Mammary epithelial cell (primary cell): ENCODE measurements at regions of chr19 and their contacts with region 1.

Region 1: DNA sequence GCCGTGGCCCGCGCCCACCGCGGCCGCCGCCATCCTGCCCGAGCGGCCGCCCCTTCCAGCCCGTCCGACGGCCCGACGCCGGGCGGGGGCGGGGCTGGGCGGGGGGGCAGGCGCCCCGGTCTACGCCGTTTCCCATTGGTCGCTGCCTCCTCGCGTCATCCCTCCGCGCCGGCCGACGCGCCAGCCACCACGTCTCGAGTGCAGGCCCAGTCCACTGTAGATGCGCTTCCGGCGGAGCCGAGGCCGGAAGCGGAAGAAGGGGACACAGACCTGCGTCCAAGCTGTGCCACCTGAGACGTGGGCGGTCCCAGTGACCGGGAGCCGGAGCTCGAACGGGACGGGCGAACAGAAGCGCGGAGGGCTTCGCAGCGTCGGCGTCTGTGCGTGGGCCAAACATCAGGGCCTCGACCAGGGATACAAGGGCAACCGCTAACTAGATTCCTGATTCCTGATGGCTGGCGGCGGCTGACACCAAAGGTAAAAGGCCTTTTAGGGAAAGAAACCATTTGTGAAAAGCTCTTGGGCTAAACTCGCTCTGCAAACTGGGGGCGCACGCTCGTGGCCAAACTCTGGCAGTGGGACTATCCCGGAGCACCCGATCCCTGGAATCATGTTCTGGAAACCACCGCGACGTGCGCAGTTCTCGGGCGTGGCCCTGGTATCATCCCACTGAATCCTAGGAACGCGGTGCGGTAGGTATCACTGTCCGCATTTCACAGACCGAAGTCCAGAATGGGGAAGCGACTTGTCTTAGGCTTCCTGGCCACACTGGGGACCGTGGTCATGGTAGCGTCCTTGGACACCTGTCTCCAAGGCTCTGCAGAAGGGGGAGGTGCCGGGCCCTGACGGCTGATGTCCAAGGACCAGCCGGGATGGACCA is at the start of gene SLC35E1:
- DNase-seq: peak; percentile 96
- H3K4me3 ChIP-seq: peak within 1 kb of the TSS; percentile 86 to 92 (median 91)
- H3K27ac ChIP-seq: peak within 1 kb of the TSS; percentile 91
- H3K4me1 ChIP-seq: peaks cover 31% of the 10 kb centered on the region
- H3K27me3 ChIP-seq: no peaks in the 10 kb centered on the region
- CTCF ChIP-seq: no peak
- total RNA-seq, gene SLC35E1: 50.8 to 67.2 TPM

Region 2: DNA sequence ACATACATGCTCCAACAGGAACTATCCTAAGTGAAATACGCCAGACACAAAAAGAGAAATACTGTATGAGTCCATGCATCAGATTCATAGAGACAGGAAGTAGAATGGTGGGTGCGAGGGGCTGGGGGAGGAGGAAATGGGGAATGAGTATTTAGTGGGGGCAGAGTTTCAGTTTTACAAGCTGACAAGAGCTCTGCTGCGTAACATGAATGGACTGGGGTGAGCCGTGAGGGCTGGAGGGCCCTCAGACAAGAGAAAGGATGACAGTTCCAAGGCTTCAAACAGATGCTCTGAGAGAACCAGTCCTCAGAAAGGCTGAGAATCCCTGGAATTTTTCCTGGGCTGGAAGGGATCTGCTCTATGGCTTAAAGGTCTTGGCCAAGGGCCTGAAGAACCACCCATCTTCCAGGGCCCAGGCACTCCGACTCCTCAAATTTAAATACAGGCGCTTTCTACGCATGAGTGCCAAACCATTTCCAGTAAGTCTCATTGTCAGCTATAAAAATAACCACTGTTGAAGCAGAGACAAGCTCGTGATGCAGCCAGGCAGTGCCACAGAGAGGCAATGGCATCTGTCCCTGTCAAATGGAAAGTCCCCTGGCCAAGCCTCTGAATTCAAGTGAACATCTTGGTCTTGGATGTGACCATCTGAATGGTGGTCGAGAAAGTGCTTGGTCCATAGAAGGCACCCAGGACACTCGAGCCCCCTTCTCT is 230.4 kb before region 1 on chr19:
- CTCF ChIA-PET with region 1: no interaction called
- dilution Hi-C with region 1: no loop called
- in situ Hi-C with region 1: no loop called
- intact Hi-C with region 1: no loop called
- DNase-seq: no peak
- H3K4me3 ChIP-seq: no peak overlapping the region
- H3K27ac ChIP-seq: no peak overlapping the region
- H3K4me1 ChIP-seq: peaks cover 19% of the 10 kb centered on the region
- H3K27me3 ChIP-seq: no peaks in the 10 kb centered on the region
- CTCF ChIP-seq: no peak

Region 3: GRCh38 chr19:16355293-16356043 is 217.1 kb before region 1 on chr19:
- CTCF ChIA-PET with region 1: no interaction called
- dilution Hi-C with region 1: no loop called
- in situ Hi-C with region 1: no loop called
- intact Hi-C with region 1: no loop called
- DNase-seq: peak; percentile 21
- H3K4me3 ChIP-seq: peak overlapping the region in 1 of 3 experiments; percentile 6
- H3K27ac ChIP-seq: no peak overlapping the region
- H3K4me1 ChIP-seq: peaks cover 7% of the 10 kb centered on the region
- H3K27me3 ChIP-seq: no peaks in the 10 kb centered on the region
- CTCF ChIP-seq: no peak

Region 4: GRCh38 chr19:16529466-16530144 is 43.0 kb before region 1 on chr19:
- CTCF ChIA-PET with region 1: no interaction called
- dilution Hi-C with region 1: no loop called
- in situ Hi-C with region 1: no loop called
- intact Hi-C with region 1: no loop called
- DNase-seq: no peak
- H3K4me3 ChIP-seq: no peak overlapping the region
- H3K27ac ChIP-seq: no peak overlapping the region
- H3K4me1 ChIP-seq: no peaks in the 10 kb centered on the region
- H3K27me3 ChIP-seq: no peaks in the 10 kb centered on the region
- CTCF ChIP-seq: no peak

Region 5: DNA sequence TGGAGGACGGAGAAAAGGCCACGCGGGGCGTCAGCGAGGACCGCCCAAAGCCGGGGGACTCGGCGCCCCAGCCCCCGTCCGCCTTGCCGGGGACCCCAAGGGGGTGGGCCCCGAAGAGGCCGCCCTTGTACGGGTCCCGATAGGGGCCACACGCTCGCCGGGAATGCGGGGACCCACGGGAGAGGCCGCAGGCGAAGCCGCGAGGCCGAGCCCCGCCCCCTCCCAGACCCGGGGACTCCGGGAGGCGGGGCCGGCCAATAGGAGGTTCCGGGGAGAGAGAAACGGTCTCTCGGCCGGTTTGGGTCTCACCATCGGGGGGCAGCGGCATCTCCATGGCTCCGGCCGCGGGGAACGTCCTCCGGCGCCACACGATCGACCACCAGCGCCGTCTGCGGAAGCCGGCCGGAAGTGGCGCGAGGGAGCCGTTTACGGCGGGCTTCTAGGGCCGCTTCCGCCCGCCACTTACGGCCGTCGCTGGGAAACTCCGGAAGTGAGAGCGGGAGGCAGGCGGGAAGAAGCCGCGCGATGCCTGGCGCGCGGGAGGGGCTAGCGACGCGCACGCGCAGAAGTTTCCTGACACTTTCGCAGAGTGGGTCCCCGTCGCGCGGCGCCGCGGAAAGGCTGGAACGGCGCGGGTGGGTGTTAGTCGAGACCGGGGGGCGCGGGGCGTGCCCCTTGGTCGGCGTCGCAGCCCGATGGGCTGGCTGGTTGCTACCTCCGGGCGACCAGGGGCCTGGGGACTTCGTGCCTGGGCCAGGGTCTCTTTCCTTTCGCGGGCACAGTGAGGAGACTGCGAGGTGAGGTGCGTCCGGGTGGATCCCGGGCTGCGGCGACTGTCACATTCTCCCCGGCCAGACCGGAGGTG is 30.3 kb before region 1 on chr19 and contains the start of gene CHERP:
- CTCF ChIA-PET with region 1: no interaction called
- dilution Hi-C with region 1: loop called (anchors 5 kb)
- in situ Hi-C with region 1: no loop called
- intact Hi-C with region 1: loop called (anchors 2 kb)
- DNase-seq: peak; percentile 90
- H3K4me3 ChIP-seq: peak within 1 kb of the TSS; percentile 73 to 96 (median 88)
- H3K27ac ChIP-seq: peak within 1 kb of the TSS; percentile 78
- H3K4me1 ChIP-seq: peaks cover 6% of the 10 kb centered on the region
- H3K27me3 ChIP-seq: no peaks in the 10 kb centered on the region
- CTCF ChIP-seq: no peak
- total RNA-seq, gene CHERP: 5.7 to 49.6 TPM

Region 6: GRCh38 chr19:16584248-16585141 is 11.9 kb after region 1 on chr19:
- CTCF ChIA-PET with region 1: interaction called, 8 read pairs
- dilution Hi-C with region 1: no loop called
- in situ Hi-C with region 1: no loop called
- intact Hi-C with region 1: loop called (anchors 2 kb)
- DNase-seq: peak; percentile 75
- H3K4me3 ChIP-seq: no peak overlapping the region
- H3K27ac ChIP-seq: no peak overlapping the region
- H3K4me1 ChIP-seq: peaks cover 74% of the 10 kb centered on the region
- H3K27me3 ChIP-seq: no peaks in the 10 kb centered on the region
- CTCF ChIP-seq: no peak

Region 7: GRCh38 chr19:16620018-16620417 is 47.4 kb after region 1 on chr19:
- CTCF ChIA-PET with region 1: no interaction called
- dilution Hi-C with region 1: loop called (anchors 5 kb)
- in situ Hi-C with region 1: loop called in 1 of 2 experiments (anchors 5 kb)
- intact Hi-C with region 1: no loop called
- DNase-seq: no peak
- H3K4me3 ChIP-seq: no peak overlapping the region
- H3K27ac ChIP-seq: no peak overlapping the region
- H3K4me1 ChIP-seq: peaks cover 11% of the 10 kb centered on the region
- H3K27me3 ChIP-seq: no peaks in the 10 kb centered on the region
- CTCF ChIP-seq: no peak

Region 8: DNA sequence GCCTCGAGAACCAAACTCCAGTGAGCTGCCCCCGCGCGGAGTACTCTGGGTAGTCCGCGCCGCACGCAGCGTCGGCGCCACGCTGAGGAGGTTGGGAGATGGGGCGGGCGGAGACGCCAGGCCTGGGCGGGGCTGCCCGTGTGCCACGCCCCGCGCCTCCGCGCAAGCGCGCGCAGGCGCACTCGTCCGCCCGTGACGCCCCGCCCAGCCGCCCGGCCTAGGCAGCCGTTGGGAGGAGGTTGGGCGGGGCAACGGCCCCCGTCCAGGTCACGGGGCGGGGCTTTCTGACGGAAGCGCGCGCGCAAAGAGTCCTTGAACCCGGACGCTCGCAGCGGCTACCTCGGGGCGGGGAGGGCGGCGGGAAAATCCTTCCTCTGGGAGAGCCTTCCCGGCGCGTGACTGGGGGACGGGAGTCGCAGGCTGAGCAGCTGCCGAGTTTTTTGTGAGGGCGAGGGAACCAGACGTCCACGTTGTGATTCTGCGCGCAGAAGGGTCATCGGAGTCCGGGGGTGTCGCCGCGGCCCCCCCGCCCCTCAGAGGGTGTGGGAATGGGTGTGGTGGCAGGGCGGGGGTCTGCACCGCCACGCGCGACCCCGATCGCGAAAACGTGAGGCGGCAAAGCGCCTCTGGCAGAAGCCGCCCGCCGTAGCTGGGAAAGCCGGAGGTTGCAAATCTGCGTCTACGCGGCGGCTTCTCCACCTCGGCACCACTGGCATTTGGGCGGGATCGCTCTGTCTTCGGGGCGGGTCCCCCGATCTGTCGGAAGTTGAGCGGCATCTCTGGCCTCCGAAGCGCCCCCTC is 55.8 kb after region 1 on chr19 and contains the start of gene MED26:
- CTCF ChIA-PET with region 1: interaction called, 7 read pairs
- dilution Hi-C with region 1: loop called (anchors 5 kb)
- in situ Hi-C with region 1: loop called in 1 of 2 experiments (anchors 5 kb)
- intact Hi-C with region 1: loop called (anchors 1 kb)
- DNase-seq: peak; percentile 91
- H3K4me3 ChIP-seq: peak within 1 kb of the TSS; percentile 80 to 93 (median 83)
- H3K27ac ChIP-seq: peak within 1 kb of the TSS; percentile 80
- H3K4me1 ChIP-seq: peaks cover 13% of the 10 kb centered on the region
- H3K27me3 ChIP-seq: no peaks in the 10 kb centered on the region
- CTCF ChIP-seq: peak in 1 of 2 donors; percentile 22
- total RNA-seq, gene MED26: 8.8 to 10.9 TPM

Region 9: GRCh38 chr19:16638666-16639065 is 66.1 kb after region 1 on chr19:
- CTCF ChIA-PET with region 1: no interaction called
- dilution Hi-C with region 1: no loop called
- in situ Hi-C with region 1: no loop called
- intact Hi-C with region 1: no loop called
- DNase-seq: no peak
- H3K4me3 ChIP-seq: no peak overlapping the region
- H3K27ac ChIP-seq: no peak overlapping the region
- H3K4me1 ChIP-seq: no peaks in the 10 kb centered on the region
- H3K27me3 ChIP-seq: no peaks in the 10 kb centered on the region
- CTCF ChIP-seq: no peak

Region 10: DNA sequence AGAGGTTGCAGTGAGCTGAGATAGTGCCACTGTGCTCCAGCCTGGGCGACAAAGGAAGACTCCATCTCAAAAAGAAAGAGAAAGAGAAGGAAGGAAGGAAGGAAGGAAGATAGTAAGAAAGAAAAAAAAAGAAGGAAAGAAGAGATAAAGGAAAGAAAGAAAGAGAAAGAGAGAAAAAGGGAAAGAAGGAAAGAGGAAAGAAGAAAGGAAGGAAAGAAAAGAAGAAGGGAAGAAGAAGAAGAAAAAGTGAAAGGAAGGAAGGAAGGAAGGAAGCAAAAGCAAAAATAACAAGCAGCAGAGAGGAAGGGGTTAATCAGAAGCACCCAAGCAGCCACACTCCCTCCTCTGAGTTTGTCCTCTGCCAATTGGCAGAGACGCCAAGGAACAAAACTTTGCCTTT is 179.2 kb after region 1 on chr19:
- CTCF ChIA-PET with region 1: no interaction called
- dilution Hi-C with region 1: loop called (anchors 10 kb)
- in situ Hi-C with region 1: no loop called
- intact Hi-C with region 1: no loop called
- DNase-seq: no peak
- H3K4me3 ChIP-seq: no peak overlapping the region
- H3K27ac ChIP-seq: no peak overlapping the region
- H3K4me1 ChIP-seq: no peaks in the 10 kb centered on the region
- H3K27me3 ChIP-seq: no peaks in the 10 kb centered on the region
- CTCF ChIP-seq: no peak